ENCODE measurements at regions of chr11 and their contacts with region 1.

Region 1: DNA sequence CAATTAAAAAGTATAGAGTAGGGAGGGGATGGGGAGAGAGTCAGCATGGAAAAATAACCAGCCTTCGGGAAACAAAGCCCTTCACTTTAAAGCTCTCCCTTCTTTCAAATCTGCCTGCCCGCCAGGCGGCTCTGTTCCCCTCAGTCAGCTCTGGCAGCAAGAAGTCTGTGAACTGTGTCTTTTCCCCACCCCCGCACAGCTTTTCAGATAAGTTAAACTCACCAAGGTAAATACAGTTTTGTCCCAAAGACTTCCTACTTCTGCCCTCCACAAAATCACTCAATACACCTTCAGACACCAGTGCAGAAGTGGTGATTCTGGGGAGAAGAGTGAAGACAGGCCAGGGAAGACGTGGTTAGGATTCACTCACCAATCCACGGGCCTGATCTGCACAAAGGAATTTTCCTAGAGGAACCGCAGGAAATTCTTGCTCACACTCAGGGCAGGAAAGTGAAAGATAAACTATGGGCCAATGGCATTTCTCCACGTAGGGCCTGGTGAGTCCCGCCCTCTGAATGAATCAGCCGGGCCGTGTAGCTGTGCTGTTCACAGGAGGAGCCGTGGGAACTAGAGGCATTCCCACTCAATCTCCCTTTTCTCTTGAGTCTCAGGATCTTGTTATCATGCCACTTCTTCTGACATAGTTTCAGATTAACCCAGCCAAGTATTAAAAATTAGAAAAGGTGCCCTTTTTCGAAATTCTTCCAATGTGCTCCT is at the start of gene TRIM5:
- DNase-seq: peak; percentile 81
- H3K4me3 ChIP-seq: peak within 1 kb of the TSS; percentile 75
- H3K27ac ChIP-seq: peak within 1 kb of the TSS; percentile 73
- H3K4me1 ChIP-seq: peaks cover 22% of the 10 kb centered on the region
- CTCF ChIP-seq: peak; percentile 80
- total RNA-seq, gene TRIM5: 16.6 and 19.6 TPM in 2 replicates

Region 2: DNA sequence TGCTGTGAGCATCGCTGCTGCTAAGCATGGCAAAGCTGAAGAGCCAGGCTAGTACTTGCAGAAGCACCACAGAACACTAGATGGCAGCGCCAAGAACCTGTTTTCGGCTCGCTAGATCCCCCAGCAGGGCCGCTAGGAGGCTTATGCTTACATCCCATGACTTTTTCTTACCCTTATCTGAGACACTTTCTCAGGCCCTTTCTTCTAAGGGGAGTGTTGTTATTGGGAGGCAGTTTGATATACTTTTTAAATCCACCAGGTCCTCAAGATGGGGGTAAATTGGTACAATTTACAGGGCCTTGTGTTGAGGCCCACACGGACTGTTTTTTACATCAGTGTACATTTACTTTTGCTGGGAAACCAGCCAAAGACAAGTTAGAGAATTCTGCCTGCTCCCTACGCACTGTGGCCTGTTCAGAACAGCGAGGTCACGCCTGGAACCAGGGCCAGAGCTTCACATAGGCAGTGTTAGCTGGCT is 84.4 kb before region 1 on chr11:
- CTCF ChIA-PET with region 1: no interaction called
- POLR2A ChIA-PET with region 1: no interaction called
- intact Hi-C with region 1: loop called (anchors 1 kb)
- DNase-seq: peak; percentile 82
- H3K4me3 ChIP-seq: no peak overlapping the region
- H3K27ac ChIP-seq: no peak overlapping the region
- H3K4me1 ChIP-seq: no peaks in the 10 kb centered on the region
- CTCF ChIP-seq: peak; percentile 91

Region 3: GRCh38 chr11:5624489-5625279 is 60.1 kb before region 1 on chr11 and contains the start of gene TRIM34:
- CTCF ChIA-PET with region 1: no interaction called
- POLR2A ChIA-PET with region 1: interaction called, 6 read pairs
- intact Hi-C with region 1: loop called (anchors 2 kb)
- DNase-seq: peak; percentile 89
- H3K4me3 ChIP-seq: peak within 1 kb of the TSS; percentile 69
- H3K27ac ChIP-seq: peak within 1 kb of the TSS; percentile 30
- H3K4me1 ChIP-seq: peaks cover 17% of the 10 kb centered on the region
- CTCF ChIP-seq: no peak
- total RNA-seq, gene TRIM34: 8.4 and 12.0 TPM in 2 replicates

Region 4: GRCh38 chr11:5700421-5701054 is 15.7 kb after region 1 on chr11:
- CTCF ChIA-PET with region 1: no interaction called
- POLR2A ChIA-PET with region 1: interaction called, 26 read pairs
- intact Hi-C with region 1: no loop called
- DNase-seq: no peak
- H3K4me3 ChIP-seq: no peak overlapping the region
- H3K27ac ChIP-seq: no peak overlapping the region
- H3K4me1 ChIP-seq: peaks cover 10% of the 10 kb centered on the region
- CTCF ChIP-seq: no peak

Region 5: GRCh38 chr11:5712507-5712906 is 27.7 kb after region 1 on chr11:
- CTCF ChIA-PET with region 1: interaction called, 4 read pairs
- POLR2A ChIA-PET with region 1: interaction called, 5 read pairs
- intact Hi-C with region 1: loop called (anchors 1 kb)
- DNase-seq: peak; percentile 62
- H3K4me3 ChIP-seq: no peak overlapping the region
- H3K27ac ChIP-seq: no peak overlapping the region
- H3K4me1 ChIP-seq: no peaks in the 10 kb centered on the region
- CTCF ChIP-seq: peak; percentile 84

Region 6: DNA sequence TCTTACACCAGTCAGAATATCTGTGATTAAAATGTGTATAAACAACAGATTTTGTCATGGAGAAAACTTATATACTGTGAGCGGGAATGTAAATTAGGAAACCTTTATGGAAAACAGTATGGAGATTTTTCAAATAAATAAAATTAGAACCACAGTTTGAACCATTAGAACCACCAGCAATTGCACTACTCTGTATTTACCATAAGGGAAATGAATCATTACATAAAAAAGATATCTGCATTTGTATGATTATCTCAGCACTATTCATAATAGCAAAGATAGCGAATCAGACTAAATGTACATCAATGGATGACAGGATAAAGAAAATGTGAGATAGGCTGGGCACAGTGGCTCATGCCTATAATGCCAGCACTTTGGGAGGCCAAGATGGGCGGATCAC is 61.8 kb after region 1 on chr11:
- CTCF ChIA-PET with region 1: no interaction called
- POLR2A ChIA-PET with region 1: no interaction called
- intact Hi-C with region 1: no loop called
- DNase-seq: no peak
- H3K4me3 ChIP-seq: no peak overlapping the region
- H3K27ac ChIP-seq: no peak overlapping the region
- H3K4me1 ChIP-seq: no peaks in the 10 kb centered on the region
- CTCF ChIP-seq: no peak

Region 7: DNA sequence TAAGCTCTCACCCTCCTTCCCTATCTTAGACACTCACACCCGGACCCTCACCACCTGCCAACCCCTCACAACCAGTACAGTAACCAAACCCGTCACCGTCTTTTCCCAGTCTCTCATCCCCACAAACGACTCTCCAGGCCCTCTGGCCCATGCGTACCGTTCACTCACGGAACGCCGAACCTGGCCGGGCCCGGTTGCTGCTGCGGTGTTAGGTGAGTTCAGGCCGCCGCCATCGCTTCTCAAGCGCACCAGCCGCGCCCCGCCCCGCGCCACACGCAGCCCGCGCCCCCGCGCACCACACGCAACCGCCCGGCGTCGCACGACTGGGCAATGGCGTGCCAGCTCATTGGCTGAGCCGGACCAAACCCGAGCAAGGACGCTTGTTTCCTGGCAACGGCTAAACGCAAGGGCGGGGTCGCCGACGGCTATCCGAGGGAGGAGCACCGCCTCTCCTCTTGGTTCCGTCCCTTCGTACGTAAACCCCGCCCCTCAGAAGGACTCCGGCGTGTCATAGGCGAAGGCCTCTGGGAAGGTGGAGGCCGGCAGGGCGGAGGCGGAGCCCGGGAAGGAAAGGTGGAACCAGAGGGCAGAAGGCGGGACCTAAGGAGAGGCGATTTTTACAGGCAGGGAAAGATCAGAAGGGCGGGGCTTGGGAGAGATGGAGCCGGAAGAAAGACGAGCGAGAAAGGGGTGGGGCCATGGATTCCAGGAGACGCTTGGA is 549.7 kb after region 1 on chr11 and contains the start of gene FHIP1B:
- CTCF ChIA-PET with region 1: no interaction called
- POLR2A ChIA-PET with region 1: no interaction called
- intact Hi-C with region 1: loop called (anchors 10 kb)
- DNase-seq: peak; percentile 100
- H3K4me3 ChIP-seq: peak within 1 kb of the TSS; percentile 86
- H3K27ac ChIP-seq: peak within 1 kb of the TSS; percentile 49
- H3K4me1 ChIP-seq: peaks cover 35% of the 10 kb centered on the region
- CTCF ChIP-seq: no peak
- total RNA-seq, gene FHIP1B: 15.7 and 20.1 TPM in 2 replicates